ENCODE measurements at regions of chr10 and their contacts with region 1.

Region 1: GRCh38 chr10:103772096-103772845 is 83.1 kb downstream of the SH3PXD2A start:
- DNase-seq: peak; percentile 98
- ATAC-seq: peak; percentile 98
- H3K4me3 ChIP-seq: 0 out of 2 replicates have a peak overlapping the region, but pooled peaks have one; percentile 4
- H3K27ac ChIP-seq: peak overlapping the region; percentile 26
- H3K4me1 ChIP-seq: peaks cover 8% of the 10 kb centered on the region; the same call in 1 of the 2 replicates
- H3K27me3 ChIP-seq: no peaks in the 10 kb centered on the region
- CTCF ChIP-seq: no peak
- POLR2A ChIP-seq: peak; percentile 20; the same call in 1 of the 2 replicates
- RAD21 ChIP-seq: peak; percentile 4; the same call in 1 of the 2 replicates

Region 2: GRCh38 chr10:103564776-103565520 is 207.3 kb before region 1 on chr10:
- CTCF ChIA-PET with region 1: no interaction called
- POLR2A ChIA-PET with region 1: no interaction called
- dilution Hi-C with region 1: no loop called
- in situ Hi-C with region 1: no loop called
- intact Hi-C with region 1: no loop called
- DNase-seq: no peak
- ATAC-seq: peak; percentile 54
- H3K4me3 ChIP-seq: no peak overlapping the region
- H3K27ac ChIP-seq: no peak overlapping the region
- H3K4me1 ChIP-seq: no peaks in the 10 kb centered on the region; the same call in 1 of the 2 replicates
- H3K27me3 ChIP-seq: peaks cover 63% of the 10 kb centered on the region
- CTCF ChIP-seq: peak; percentile 47
- POLR2A ChIP-seq: no peak
- RAD21 ChIP-seq: peak; percentile 46

Region 3: DNA sequence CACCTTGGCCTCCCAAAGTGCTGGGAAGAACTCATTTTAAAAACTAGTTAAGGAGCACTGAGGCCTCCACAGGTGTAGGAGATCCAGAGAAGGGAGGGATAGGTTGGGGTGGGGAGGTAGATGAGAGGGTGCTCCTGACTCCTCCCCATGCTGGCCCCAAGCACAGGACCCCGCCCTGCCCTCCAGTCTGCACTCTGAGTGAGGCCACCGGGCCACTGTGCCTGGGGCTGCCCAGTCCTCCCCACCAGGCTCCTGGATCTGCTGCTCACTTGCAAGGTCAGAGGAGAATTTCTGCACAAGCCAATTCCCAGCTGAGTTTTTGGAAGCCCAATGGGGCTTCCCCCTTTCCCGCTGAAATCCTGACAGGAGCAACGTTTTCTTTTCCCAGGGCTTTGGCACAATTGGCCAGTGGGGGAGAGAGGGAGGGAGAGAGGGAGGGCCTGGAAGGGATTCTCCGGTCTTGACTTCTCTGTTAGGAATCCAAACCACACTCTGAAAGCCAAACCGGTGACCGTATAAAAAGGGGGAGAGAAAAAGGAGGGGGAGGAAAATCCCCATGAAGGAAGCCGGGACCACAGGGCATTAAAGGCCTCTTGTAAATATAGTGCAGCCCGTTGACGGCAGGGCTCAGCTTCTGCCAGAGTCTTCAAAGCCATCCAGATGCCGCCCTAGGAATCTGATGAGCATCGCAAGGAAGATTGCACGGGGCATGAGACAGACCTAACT is 33.1 kb before region 1 on chr10:
- CTCF ChIA-PET with region 1: no interaction called
- POLR2A ChIA-PET with region 1: no interaction called
- dilution Hi-C with region 1: no loop called
- in situ Hi-C with region 1: no loop called
- intact Hi-C with region 1: loop called (anchors 1 kb)
- DNase-seq: peak; percentile 98
- ATAC-seq: peak; percentile 94
- H3K4me3 ChIP-seq: no peak overlapping the region; the same call in 1 of the 2 replicates
- H3K27ac ChIP-seq: peak overlapping the region; percentile 73
- H3K4me1 ChIP-seq: peaks cover 27% of the 10 kb centered on the region
- H3K27me3 ChIP-seq: no peaks in the 10 kb centered on the region
- CTCF ChIP-seq: no peak
- POLR2A ChIP-seq: no peak
- RAD21 ChIP-seq: 0 out of 2 replicates have a peak, but pooled peaks have one; percentile 3

Measured in IMR-90 (cell line).